Vagina (tissue), 2 donors: ENCODE measurements at regions of chr5 and their contacts with region 1.

Region 1: GRCh38 chr5:180860887-180861822 is at the start of gene ZFP62:
- DNase-seq: no peak
- H3K4me3 ChIP-seq: peak within 1 kb of the TSS; percentile 81 to 85
- H3K27ac ChIP-seq: peak within 1 kb of the TSS; percentile 90
- H3K4me1 ChIP-seq: peaks cover 12% of the 10 kb centered on the region
- H3K27me3 ChIP-seq: no peaks in the 10 kb centered on the region
- CTCF ChIP-seq: peak in 2 of 3 experiments; percentile 6 to 44
- POLR2A ChIP-seq: peak in 1 of 2 donors; percentile 64
- total RNA-seq, gene ZFP62: 22.3 TPM

Region 2: GRCh38 chr5:180784497-180785097 is 76.6 kb before region 1 on chr5:
- intact Hi-C with region 1: loop called (anchors 5 kb)
- DNase-seq: peak in 1 of 2 donors; percentile 40
- H3K4me3 ChIP-seq: no peak overlapping the region
- H3K27ac ChIP-seq: peak overlapping the region; percentile 81
- H3K4me1 ChIP-seq: peaks cover 44% of the 10 kb centered on the region
- H3K27me3 ChIP-seq: no peaks in the 10 kb centered on the region
- CTCF ChIP-seq: peak; percentile 31 to 63 (median 38)
- POLR2A ChIP-seq: no peak

Region 3: DNA sequence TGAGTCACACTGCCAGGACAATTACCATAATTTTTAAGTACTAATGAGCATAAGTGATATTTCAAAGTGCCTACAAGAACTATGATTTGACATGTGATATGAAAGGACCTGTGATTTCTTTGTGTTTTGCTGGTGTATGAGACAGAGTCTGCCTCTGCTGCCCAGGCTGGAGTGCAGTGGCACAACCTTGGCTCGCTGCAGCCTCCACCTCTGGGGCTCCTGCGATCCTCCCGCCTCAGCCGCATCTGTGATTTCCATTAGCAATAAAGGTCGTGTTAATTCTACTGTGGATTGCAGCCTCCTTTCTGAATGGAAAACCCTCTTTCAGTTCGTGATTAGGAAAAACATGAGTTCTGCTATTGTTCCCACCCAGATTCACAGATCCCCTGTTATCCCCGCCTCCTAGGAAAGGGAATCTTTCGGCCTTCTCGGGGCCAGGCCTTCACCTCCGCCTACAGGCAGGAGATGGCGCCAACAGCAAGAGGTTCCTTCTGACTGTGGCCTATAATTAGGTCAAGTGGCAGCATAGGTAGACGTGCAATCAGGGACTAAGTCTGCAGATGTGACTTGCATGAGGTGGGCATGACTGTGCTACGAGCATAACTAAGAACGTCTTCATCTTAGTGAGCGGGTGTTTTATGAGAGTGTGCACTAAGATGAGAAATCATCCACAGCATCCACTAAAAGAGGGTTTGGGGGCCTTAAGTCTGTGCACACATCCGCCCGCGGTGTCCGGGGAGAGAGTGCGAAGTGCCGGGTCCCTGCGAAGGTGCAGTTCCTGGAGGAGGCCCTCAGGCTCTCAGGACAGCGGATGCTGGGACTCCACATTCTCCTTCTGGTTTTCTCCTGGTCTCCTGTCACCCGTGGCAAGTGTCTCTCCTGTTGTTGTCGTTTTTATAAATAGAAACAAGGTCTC is 320.8 kb after region 1 on chr5:
- intact Hi-C with region 1: loop called (anchors 10 kb)
- DNase-seq: no peak
- H3K4me3 ChIP-seq: no peak overlapping the region
- H3K27ac ChIP-seq: no peak overlapping the region
- H3K4me1 ChIP-seq: peaks cover 19% of the 10 kb centered on the region
- H3K27me3 ChIP-seq: no peaks in the 10 kb centered on the region
- CTCF ChIP-seq: peak in 2 of 3 experiments; percentile 53 to 81
- POLR2A ChIP-seq: no peak